Activated B cell treated with CpG ODN at 0.5 μM for 24 hours (primary cell): ENCODE measurements at regions of chr10 and their contacts with region 1.

Region 1: GRCh38 chr10:119080521-119081260 is at the start of gene EIF3A:
- DNase-seq: peak; percentile 97
- ATAC-seq: peak; percentile 79
- H3K4me3 Mint-ChIP-seq: peak within 1 kb of the TSS; percentile 89
- H3K27ac Mint-ChIP-seq: peak within 1 kb of the TSS; percentile 93
- H3K4me1 Mint-ChIP-seq: peaks cover 49% of the 10 kb centered on the region
- H3K27me3 Mint-ChIP-seq: no peaks in the 10 kb centered on the region
- CTCF ChIP-seq: no peak
- total RNA-seq, gene EIF3A: 109 and 114 TPM in 2 replicates

Region 2: DNA sequence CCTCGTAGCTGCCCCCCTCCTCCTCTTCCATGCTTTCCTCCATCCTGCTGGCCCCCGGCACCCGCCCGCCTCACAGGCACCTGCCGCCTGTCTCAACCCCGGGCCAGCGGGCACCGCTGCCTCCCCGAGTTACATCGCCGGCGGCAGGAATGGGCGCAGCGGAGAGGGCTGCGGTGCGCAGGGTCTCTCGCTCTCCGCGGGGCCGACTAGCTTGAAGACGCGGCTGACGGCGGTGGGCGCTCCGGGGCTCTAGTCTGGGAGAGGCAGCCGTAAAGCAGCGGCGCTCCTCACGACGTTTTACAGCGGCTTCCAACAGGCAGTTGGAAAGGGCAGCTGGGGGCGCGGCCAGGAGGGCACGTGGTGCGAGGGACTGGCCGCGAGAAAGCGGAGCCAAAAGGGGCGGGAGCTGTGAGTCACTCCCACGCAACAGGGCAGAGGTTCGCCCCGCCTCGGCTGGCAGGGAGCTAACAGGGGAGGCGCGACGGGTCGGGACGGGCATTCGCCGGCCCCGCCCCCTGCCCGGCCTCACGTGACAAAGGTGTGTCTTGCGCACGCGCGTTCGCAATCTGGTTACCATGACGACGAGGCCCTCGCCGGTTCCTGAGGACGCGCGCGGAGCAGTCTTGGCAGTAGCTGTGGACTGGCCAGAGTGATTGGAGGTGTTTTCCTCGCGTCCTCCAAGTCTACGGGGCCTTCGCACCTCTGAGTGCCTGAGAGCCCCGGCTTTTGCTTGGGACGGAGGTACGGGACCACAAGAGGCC is 325.8 kb before region 1 on chr10 and contains the start of gene CACUL1:
- CTCF ChIA-PET with region 1: no interaction called
- POLR2A ChIA-PET with region 1: no interaction called
- intact Hi-C with region 1: loop called (anchors 1 kb)
- DNase-seq: peak; percentile 99
- ATAC-seq: peak; percentile 98
- H3K4me3 Mint-ChIP-seq: peak within 1 kb of the TSS; percentile 91
- H3K27ac Mint-ChIP-seq: peak within 1 kb of the TSS; percentile 78
- H3K4me1 Mint-ChIP-seq: peaks cover 38% of the 10 kb centered on the region
- H3K27me3 Mint-ChIP-seq: peaks cover 3% of the 10 kb centered on the region
- CTCF ChIP-seq: no peak
- total RNA-seq, gene CACUL1: 19.8 and 27.1 TPM in 2 replicates

Region 3: GRCh38 chr10:119051775-119052174 is 28.9 kb before region 1 on chr10:
- CTCF ChIA-PET with region 1: no interaction called
- POLR2A ChIA-PET with region 1: interaction called, 11 read pairs
- intact Hi-C with region 1: no loop called
- DNase-seq: no peak
- ATAC-seq: no peak
- H3K4me3 Mint-ChIP-seq: no peak overlapping the region
- H3K27ac Mint-ChIP-seq: no peak overlapping the region
- H3K4me1 Mint-ChIP-seq: peaks cover 13% of the 10 kb centered on the region
- H3K27me3 Mint-ChIP-seq: no peaks in the 10 kb centered on the region
- CTCF ChIP-seq: no peak

Region 4: DNA sequence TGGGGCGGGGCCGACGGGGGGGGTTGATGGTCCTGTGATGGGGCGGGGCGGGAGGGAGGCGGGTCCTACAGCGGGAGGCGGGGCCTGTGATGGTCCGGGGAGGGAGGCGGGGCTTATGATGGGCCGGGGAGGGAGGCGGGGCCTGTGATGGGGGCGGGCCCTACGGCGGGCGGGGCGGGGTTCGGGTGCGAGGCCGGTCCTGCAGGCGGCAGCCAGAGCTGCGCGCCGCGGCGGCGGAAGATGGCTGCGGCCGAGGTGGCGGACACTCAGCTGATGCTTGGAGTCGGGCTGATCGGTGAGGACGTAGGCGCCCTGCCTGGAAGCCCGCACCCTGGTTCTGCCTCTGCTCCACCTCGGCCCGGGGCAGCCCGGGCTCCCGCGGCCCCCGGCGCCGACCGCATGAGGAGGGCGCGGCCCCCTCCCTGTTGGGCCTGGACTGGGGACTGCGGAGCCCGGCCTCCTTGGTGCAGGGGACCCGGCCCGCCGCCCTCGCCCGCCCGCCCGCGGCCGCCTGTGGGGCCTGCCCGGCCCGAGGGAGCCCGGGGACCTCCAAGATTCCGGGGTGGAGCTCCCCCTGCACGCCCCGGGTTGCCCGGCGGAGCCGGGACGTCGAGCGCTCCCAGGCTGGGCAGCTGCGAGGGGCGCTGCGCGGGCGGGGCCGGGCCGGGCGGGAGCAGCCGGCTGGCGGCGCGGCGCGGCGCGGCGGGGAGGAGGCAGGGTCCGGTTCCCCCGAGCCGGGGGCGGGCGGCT is 23.4 kb after region 1 on chr10 and contains the start of gene DENND10:
- CTCF ChIA-PET with region 1: interaction called, 5 read pairs
- POLR2A ChIA-PET with region 1: interaction called, 13 read pairs
- intact Hi-C with region 1: loop called (anchors 1 kb)
- DNase-seq: peak; percentile 69
- ATAC-seq: peak; percentile 91
- H3K4me3 Mint-ChIP-seq: peak within 1 kb of the TSS; percentile 75
- H3K27ac Mint-ChIP-seq: peak within 1 kb of the TSS; percentile 68
- H3K4me1 Mint-ChIP-seq: peaks cover 16% of the 10 kb centered on the region
- H3K27me3 Mint-ChIP-seq: no peaks in the 10 kb centered on the region
- CTCF ChIP-seq: no peak
- total RNA-seq, gene DENND10: 14.4 and 15.0 TPM in 2 replicates

Region 5: GRCh38 chr10:119165171-119166110 is 84.8 kb after region 1 on chr10 and contains the start of gene SFXN4:
- CTCF ChIA-PET with region 1: no interaction called
- POLR2A ChIA-PET with region 1: interaction called, 6 read pairs
- intact Hi-C with region 1: loop called (anchors 1 kb)
- DNase-seq: peak; percentile 83
- ATAC-seq: peak; percentile 93
- H3K4me3 Mint-ChIP-seq: peak within 1 kb of the TSS; percentile 92
- H3K27ac Mint-ChIP-seq: peak within 1 kb of the TSS; percentile 88
- H3K4me1 Mint-ChIP-seq: peaks cover 18% of the 10 kb centered on the region
- H3K27me3 Mint-ChIP-seq: no peaks in the 10 kb centered on the region
- CTCF ChIP-seq: no peak
- total RNA-seq, gene SFXN4: 18.4 and 21.7 TPM in 2 replicates

Region 6: GRCh38 chr10:119299531-119299930 is 218.8 kb after region 1 on chr10:
- CTCF ChIA-PET with region 1: no interaction called
- POLR2A ChIA-PET with region 1: no interaction called
- intact Hi-C with region 1: no loop called
- DNase-seq: no peak
- ATAC-seq: peak; percentile 40
- H3K4me3 Mint-ChIP-seq: no peak overlapping the region
- H3K27ac Mint-ChIP-seq: peak overlapping the region; percentile 92
- H3K4me1 Mint-ChIP-seq: peaks cover 58% of the 10 kb centered on the region
- H3K27me3 Mint-ChIP-seq: no peaks in the 10 kb centered on the region
- CTCF ChIP-seq: no peak

Region 7: DNA sequence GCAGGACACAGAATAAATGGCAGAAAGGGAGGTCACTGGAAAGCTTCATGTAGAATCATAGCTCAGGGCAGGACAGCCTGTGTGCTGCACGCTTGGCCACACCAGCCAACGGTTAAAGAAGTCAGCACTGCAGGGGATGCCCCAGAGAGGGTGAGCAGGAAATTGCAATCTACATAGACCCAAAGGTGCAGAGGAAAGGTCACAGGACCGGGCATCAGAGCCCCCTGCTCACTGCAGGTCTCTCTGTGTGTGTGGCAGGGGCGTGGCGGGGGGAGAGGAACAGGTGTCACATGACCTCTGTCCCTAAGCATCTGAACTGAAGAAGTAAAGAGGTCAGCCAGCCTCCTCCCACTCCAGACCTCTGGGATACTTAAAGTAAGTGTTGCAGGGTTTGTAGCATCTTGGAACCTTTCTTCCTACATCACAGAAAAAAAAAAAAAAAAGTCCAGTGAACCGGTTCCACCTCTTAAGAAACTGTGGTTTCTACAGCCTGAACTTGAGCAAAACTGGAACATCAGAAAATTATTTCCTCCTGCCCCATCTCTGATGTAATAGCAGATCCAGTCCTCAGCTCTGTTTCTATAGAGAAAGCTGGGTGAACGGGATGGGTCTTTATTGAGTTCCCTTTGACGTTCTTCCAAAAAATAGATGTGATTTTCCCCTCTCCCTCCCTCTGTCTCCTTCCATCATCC is 397.6 kb after region 1 on chr10:
- CTCF ChIA-PET with region 1: no interaction called
- POLR2A ChIA-PET with region 1: no interaction called
- intact Hi-C with region 1: loop called (anchors 5 kb)
- DNase-seq: peak; percentile 66
- ATAC-seq: peak; percentile 96
- H3K4me3 Mint-ChIP-seq: peak overlapping the region; percentile 68
- H3K27ac Mint-ChIP-seq: peak overlapping the region; percentile 93
- H3K4me1 Mint-ChIP-seq: peaks cover 40% of the 10 kb centered on the region
- H3K27me3 Mint-ChIP-seq: no peaks in the 10 kb centered on the region
- CTCF ChIP-seq: no peak

Region 8: GRCh38 chr10:119872860-119873681 is 792.4 kb after region 1 on chr10:
- CTCF ChIA-PET with region 1: no interaction called
- POLR2A ChIA-PET with region 1: interaction called, 3 read pairs
- intact Hi-C with region 1: loop called (anchors 10 kb)
- DNase-seq: peak; percentile 89
- ATAC-seq: peak; percentile 92
- H3K4me3 Mint-ChIP-seq: peak overlapping the region; percentile 88
- H3K27ac Mint-ChIP-seq: peak overlapping the region; percentile 85
- H3K4me1 Mint-ChIP-seq: peaks cover 40% of the 10 kb centered on the region
- H3K27me3 Mint-ChIP-seq: no peaks in the 10 kb centered on the region
- CTCF ChIP-seq: no peak